ENCODE measurements at regions of chr6 and their contacts with region 1.

Region 1: DNA sequence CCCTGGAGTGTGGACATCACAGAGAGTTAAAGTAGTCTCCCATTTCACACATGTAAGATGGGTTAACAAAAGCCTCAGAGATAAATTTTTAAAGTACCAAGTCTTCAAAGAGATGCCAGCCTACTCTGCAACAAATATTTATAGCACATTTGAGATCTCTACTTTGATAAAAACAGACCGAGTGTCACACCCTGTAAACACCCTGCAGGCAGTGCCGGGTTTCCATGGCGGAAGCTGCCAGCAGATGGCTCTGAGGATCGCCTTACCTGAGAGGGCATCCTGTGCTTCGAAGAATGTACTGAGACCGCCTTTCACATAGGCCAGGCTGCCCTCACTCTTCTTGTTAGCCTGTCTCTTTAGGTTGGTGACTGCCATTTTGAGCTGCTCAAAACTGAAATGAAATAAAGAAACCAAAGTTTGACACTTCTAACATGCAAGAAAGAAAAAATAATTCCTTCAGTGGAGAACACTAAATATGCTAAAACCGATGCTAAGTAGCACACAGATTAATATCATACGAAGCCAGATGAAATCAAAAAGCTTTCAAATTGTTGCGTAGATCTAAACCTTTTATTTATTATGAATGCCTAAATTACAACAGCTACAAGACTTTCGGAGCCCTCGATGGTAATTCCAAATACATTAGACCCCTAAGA is 39.3 kb downstream of the HUS1B start:
- DNase-seq: peak in 1 of 2 experiments; percentile 52
- H3K4me3 ChIP-seq: no peak overlapping the region
- H3K27ac ChIP-seq: no peak overlapping the region
- H3K4me1 ChIP-seq: no peaks in the 10 kb centered on the region
- H3K27me3 ChIP-seq: no peaks in the 10 kb centered on the region
- CTCF ChIP-seq: no peak

Region 2: DNA sequence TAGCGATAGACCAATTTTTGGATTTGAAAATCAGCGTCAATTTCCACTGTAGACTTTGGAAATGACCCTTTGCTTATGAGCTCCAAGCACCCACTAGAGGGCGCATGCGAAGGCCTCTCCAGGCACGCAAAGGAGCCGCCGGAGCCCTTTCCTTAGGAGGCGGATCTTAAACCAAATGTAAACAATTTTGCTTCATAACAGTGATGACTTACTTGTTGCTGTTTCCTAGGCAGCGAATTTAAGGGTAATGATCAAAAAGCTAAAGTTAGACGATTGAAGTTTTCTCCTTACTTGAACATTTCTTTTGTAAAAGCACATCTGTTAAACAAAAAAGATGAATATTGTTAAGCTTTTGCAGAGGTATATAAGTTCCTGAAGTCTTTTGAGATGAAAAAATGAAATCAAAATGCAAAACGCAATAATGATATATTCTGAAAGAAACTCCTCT is 104.5 kb after region 1 on chr6:
- CTCF ChIA-PET with region 1: interaction called, 3 read pairs
- POLR2A ChIA-PET with region 1: interaction called, 3 read pairs
- intact Hi-C with region 1: loop called (anchors 10 kb)
- DNase-seq: peak; percentile 49 to 53
- H3K4me3 ChIP-seq: no peak overlapping the region
- H3K27ac ChIP-seq: no peak overlapping the region
- H3K4me1 ChIP-seq: no peaks in the 10 kb centered on the region
- H3K27me3 ChIP-seq: no peaks in the 10 kb centered on the region; the same call in 1 of the 2 replicates
- CTCF ChIP-seq: peak; percentile 81

Measured in PC-9 (cell line).